ENCODE measurements at regions of chr14 and their contacts with region 1.

Region 1: DNA sequence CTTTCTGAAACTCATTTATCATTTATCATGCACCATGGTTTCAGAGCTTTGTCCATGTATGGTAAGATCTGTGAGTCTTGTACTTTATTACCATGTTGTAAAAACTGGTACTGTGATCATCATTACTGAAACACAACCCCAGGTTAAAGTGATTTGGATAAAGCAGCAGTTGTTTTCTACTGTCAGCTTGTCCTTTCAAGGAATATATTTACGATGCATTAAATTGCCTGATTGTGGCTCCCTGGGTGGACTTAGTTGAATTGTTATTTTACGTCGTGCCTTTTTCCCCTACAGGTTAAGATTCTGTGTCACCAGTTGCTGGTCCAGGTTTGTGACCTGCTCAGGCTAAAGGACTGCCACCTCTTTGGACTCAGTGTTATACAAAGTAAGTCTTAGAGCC is 46.1 kb downstream of the FRMD6 start:
- DNase-seq: no peak
- H3K4me3 ChIP-seq: no peak overlapping the region
- H3K27ac ChIP-seq: no peak overlapping the region
- H3K4me1 ChIP-seq: no peaks in the 10 kb centered on the region
- H3K27me3 ChIP-seq: no peaks in the 10 kb centered on the region

Region 2: GRCh38 chr14:51684760-51685159 is 13.1 kb before region 1 on chr14:
- CTCF ChIA-PET with region 1: interaction called, 11 read pairs
- POLR2A ChIA-PET with region 1: no interaction called
- DNase-seq: no peak
- H3K4me3 ChIP-seq: no peak overlapping the region
- H3K27ac ChIP-seq: no peak overlapping the region
- H3K4me1 ChIP-seq: no peaks in the 10 kb centered on the region
- H3K27me3 ChIP-seq: no peaks in the 10 kb centered on the region